Activated naive CD8-positive, alpha-beta T cell treated with anti-CD3 and anti-CD28 coated beads, Interleukin-2, amount 10 ng/mL, durations not matched to agents 7 days and 5 days (primary cell): ENCODE measurements at regions of chr3 and their contacts with region 1.

Region 1: GRCh38 chr3:49411968-49412631 is at the starts of genes RHOA and TCTA:
- DNase-seq: peak; percentile 97
- ATAC-seq: peak; percentile 82
- H3K4me3 Mint-ChIP-seq: peak within 1 kb of the TSS; percentile 94
- H3K27ac Mint-ChIP-seq: peak within 1 kb of the TSS; percentile 92
- H3K4me1 Mint-ChIP-seq: peaks cover 53% of the 10 kb centered on the region
- H3K27me3 Mint-ChIP-seq: no peaks in the 10 kb centered on the region
- total RNA-seq, gene RHOA: 428 to 441 TPM
- total RNA-seq, gene TCTA: 30.3 TPM

Region 2: DNA sequence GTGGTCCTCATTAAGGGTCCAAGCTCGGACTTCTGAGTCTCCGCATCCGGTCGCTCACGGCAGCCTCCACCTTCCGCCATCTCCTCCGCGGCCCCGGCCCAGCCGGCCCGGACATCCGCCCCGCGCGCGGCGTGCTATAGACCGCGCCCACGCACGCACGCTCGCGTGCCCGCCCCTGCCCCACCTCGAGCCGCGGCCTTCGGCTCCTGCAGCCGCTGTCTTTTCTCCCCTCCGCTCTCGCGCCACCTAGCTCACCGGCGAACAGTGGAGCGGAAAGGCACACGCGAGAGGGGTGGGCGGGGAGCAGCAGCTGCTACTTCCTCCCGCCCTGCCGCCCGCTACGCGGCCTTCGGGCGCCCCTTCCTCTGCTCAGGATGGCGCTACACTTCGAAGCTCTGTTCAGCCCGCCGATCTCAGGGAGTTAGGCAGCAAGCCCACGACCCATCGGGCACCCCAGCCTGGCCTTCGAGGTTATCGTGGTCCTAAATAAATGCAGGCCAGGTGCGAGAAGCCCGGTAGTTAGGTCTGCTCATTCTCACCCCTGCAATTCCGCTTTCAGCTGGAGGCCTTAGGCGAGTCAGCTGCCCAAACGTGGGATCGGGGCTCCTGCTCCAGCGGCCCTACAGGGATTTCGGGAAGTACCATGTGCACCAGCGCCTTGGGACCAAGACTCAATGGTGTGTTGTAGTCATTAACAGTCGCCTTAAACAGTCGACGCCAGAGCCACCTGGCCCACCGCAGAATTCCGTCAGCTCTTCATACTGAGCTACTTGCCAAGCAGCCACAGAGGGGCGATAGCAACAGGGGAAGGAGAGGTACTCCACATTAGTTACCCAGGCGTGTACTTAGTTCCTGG is 71.9 kb before region 1 on chr3 and contains the start of gene USP4:
- POLR2A ChIA-PET with region 1: interaction called, 45 read pairs
- DNase-seq: peak; percentile 90
- ATAC-seq: peak; percentile 91
- H3K4me3 Mint-ChIP-seq: peak within 1 kb of the TSS; percentile 97
- H3K27ac Mint-ChIP-seq: peak within 1 kb of the TSS; percentile 98
- H3K4me1 Mint-ChIP-seq: peaks cover 40% of the 10 kb centered on the region
- H3K27me3 Mint-ChIP-seq: no peaks in the 10 kb centered on the region
- total RNA-seq, gene USP4: 89.6 to 90.0 TPM

Region 3: GRCh38 chr3:49358217-49358883 is 53.8 kb before region 1 on chr3 and contains the start of gene GPX1:
- POLR2A ChIA-PET with region 1: interaction called, 20 read pairs
- DNase-seq: peak; percentile 87
- ATAC-seq: peak; percentile 87
- H3K4me3 Mint-ChIP-seq: peak within 1 kb of the TSS; percentile 89
- H3K27ac Mint-ChIP-seq: peak within 1 kb of the TSS; percentile 87
- H3K4me1 Mint-ChIP-seq: peaks cover 26% of the 10 kb centered on the region
- H3K27me3 Mint-ChIP-seq: no peaks in the 10 kb centered on the region
- total RNA-seq, gene GPX1: 86.4 to 90.6 TPM

Region 4: GRCh38 chr3:49422379-49423248 is 10.5 kb after region 1 on chr3 and contains the start of gene AMT:
- POLR2A ChIA-PET with region 1: interaction called, 47 read pairs
- DNase-seq: no peak
- ATAC-seq: peak; percentile 18
- H3K4me3 Mint-ChIP-seq: peak within 1 kb of the TSS; percentile 8
- H3K27ac Mint-ChIP-seq: peak within 1 kb of the TSS; percentile 75
- H3K4me1 Mint-ChIP-seq: peaks cover 33% of the 10 kb centered on the region
- H3K27me3 Mint-ChIP-seq: no peaks in the 10 kb centered on the region
- total RNA-seq, gene AMT: 10.0 to 10.3 TPM

Region 5: GRCh38 chr3:49428697-49429100 is 16.6 kb after region 1 on chr3:
- POLR2A ChIA-PET with region 1: interaction called, 47 read pairs
- DNase-seq: no peak
- ATAC-seq: no peak
- H3K4me3 Mint-ChIP-seq: peak overlapping the region; percentile 93
- H3K27ac Mint-ChIP-seq: peak overlapping the region; percentile 96
- H3K4me1 Mint-ChIP-seq: peaks cover 25% of the 10 kb centered on the region
- H3K27me3 Mint-ChIP-seq: no peaks in the 10 kb centered on the region

Region 6: GRCh38 chr3:49445381-49445780 is 33.3 kb after region 1 on chr3:
- POLR2A ChIA-PET with region 1: interaction called, 43 read pairs
- DNase-seq: no peak
- ATAC-seq: no peak
- H3K4me3 Mint-ChIP-seq: no peak overlapping the region
- H3K27ac Mint-ChIP-seq: peak overlapping the region; percentile 43
- H3K4me1 Mint-ChIP-seq: peaks cover 20% of the 10 kb centered on the region
- H3K27me3 Mint-ChIP-seq: no peaks in the 10 kb centered on the region

Region 7: GRCh38 chr3:49454458-49454857 is 42.4 kb after region 1 on chr3:
- POLR2A ChIA-PET with region 1: interaction called, 10 read pairs
- DNase-seq: no peak
- ATAC-seq: peak; percentile 42
- H3K4me3 Mint-ChIP-seq: no peak overlapping the region
- H3K27ac Mint-ChIP-seq: no peak overlapping the region
- H3K4me1 Mint-ChIP-seq: no peaks in the 10 kb centered on the region
- H3K27me3 Mint-ChIP-seq: peaks cover 5% of the 10 kb centered on the region

Region 8: DNA sequence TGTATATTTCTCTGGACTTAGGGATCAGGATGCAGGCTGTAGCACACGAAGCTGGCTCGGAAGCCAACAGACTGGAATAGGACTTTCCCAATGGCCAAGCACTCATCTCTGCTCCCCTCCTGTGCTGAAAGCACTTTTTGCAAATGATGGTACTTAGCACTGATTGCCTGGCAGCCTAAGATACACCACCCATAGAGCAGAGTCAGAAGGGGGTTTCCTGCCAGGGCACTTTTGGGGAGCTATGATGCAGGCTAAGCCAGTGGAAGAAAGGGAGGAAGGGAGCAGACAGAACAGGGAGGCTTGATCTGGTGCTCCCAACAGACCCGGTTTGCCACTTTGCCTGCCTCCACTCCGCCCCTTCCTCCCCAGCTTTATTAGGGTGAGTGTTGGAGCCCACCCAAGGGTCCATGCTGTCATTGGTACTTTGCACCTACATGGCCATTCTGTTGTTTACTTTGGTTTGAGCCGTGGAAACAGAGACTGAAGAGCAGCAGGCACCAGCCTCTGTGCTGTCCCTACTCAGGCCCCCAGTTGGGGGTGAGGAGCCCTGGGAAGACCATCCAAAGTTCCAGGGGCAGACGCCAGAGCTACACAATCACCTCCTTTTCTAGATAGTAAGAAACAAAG is 158.0 kb after region 1 on chr3:
- POLR2A ChIA-PET with region 1: no interaction called
- DNase-seq: no peak
- ATAC-seq: no peak
- H3K4me3 Mint-ChIP-seq: no peak overlapping the region
- H3K27ac Mint-ChIP-seq: no peak overlapping the region
- H3K4me1 Mint-ChIP-seq: no peaks in the 10 kb centered on the region
- H3K27me3 Mint-ChIP-seq: peaks cover 19% of the 10 kb centered on the region